Psoas muscle (tissue), 8 donors: ENCODE measurements at regions of chr16 and their contacts with region 1.

Region 1: DNA sequence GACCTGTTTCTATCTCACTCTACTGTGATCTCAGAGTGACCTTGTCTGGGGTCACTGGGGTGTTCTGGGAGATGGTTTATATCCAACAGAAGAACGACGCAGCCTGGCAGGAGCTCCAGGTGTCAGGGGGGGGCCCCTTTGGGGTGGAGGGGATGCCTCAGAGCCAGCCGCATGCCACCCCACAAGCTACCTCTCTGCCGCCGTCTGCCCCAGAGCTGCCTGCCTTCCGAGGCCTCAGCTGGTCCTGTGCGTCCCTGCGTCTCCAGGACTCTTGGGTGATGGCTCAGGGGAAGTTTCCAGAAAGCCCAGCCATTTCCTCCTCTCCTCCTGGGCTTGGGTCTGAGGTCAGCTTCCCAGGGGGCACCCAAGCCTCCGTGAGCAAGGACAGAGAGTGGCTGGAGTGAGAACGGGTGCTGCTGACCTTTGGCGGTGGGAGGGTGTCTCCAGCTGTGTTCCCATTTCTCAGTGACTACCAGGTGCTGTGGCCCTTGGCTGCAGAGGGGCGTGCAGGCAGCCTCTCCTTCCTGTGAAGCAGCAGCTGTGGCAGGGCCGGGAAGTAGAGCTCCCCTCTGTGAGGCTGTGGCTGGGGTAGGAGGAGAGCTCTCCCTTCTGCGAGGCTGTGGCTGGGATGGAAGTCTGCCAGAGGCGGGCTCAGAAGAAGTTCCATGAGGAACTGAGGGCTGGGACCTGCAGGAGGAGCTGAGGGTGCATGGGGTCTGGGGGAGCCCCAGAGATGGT is 19.8 kb downstream of the JPH3 start:
- DNase-seq: no peak
- ATAC-seq: no peak
- H3K4me3 ChIP-seq: no peak overlapping the region
- H3K27ac ChIP-seq: no peak overlapping the region
- H3K4me1 ChIP-seq: no peaks in the 10 kb centered on the region
- H3K27me3 ChIP-seq: peaks cover 0 to 46% (median 12%) of the 10 kb centered on the region in 3 donors
- CTCF ChIP-seq: no peak

Region 2: DNA sequence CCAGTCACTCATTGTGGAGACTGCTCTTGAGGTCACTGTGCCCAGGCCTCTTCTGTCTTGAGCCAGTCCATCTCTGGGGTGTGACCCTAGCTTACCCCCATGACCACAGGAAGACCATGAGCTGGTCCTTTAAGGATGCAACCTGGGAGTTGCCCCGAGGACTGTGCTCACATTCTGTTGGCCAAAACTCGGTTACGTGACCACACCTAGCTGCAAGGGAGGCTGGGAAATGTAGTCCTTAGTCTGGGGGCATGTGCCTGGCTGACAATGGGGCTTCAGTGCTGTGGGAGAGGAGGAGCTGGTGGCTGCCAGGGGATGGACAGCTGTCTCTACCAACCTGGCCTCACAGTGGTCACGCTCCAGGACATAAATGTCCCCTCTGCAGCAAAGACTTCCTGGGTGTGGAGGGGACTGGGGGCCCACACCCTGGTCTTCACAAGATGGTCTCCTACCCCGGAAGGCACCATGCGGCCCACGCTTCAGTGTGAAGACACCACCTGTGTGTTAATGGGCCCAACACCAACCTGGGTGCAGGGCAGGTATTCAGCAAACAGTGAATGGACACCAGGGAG is 35.6 kb after region 1 on chr16:
- intact Hi-C with region 1: loop called in 1 of 2 experiments (anchors 2 kb)
- DNase-seq: no peak
- ATAC-seq: no peak
- H3K4me3 ChIP-seq: no peak overlapping the region
- H3K27ac ChIP-seq: no peak overlapping the region
- H3K4me1 ChIP-seq: no peaks in the 10 kb centered on the region
- H3K27me3 ChIP-seq: peaks cover 0 to 63% (median 15%) of the 10 kb centered on the region in 3 donors
- CTCF ChIP-seq: no peak

Region 3: GRCh38 chr16:87671221-87671620 is 49.1 kb after region 1 on chr16:
- intact Hi-C with region 1: no loop called
- DNase-seq: no peak
- ATAC-seq: no peak
- H3K4me3 ChIP-seq: no peak overlapping the region
- H3K27ac ChIP-seq: no peak overlapping the region
- H3K4me1 ChIP-seq: no peaks in the 10 kb centered on the region
- H3K27me3 ChIP-seq: peaks cover 0 to 47% (median 8%) of the 10 kb centered on the region in 3 donors
- CTCF ChIP-seq: no peak

Region 4: GRCh38 chr16:87681981-87682570 is 59.9 kb after region 1 on chr16:
- intact Hi-C with region 1: no loop called
- DNase-seq: no peak
- ATAC-seq: no peak
- H3K4me3 ChIP-seq: no peak overlapping the region
- H3K27ac ChIP-seq: no peak overlapping the region
- H3K4me1 ChIP-seq: no peaks in the 10 kb centered on the region
- H3K27me3 ChIP-seq: peaks cover 0 to 59% (median 7%) of the 10 kb centered on the region in 3 donors
- CTCF ChIP-seq: no peak